ENCODE measurements at regions of chr2 and their contacts with region 1.

Region 1: GRCh38 chr2:208175069-208175839 is 11.9 kb upstream of the CRYGA start:
- DNase-seq: peak; percentile 95
- H3K4me3 ChIP-seq: no peak overlapping the region
- H3K27ac ChIP-seq: no peak overlapping the region
- H3K4me1 ChIP-seq: peaks cover 0 to 8% (median 1%) of the 10 kb centered on the region in 4 donors
- H3K27me3 ChIP-seq: no peaks in the 10 kb centered on the region
- CTCF ChIP-seq: peak; percentile 78 to 94 (median 85)
- EP300 ChIP-seq: no peak
- POLR2A ChIP-seq: no peak

Region 2: DNA sequence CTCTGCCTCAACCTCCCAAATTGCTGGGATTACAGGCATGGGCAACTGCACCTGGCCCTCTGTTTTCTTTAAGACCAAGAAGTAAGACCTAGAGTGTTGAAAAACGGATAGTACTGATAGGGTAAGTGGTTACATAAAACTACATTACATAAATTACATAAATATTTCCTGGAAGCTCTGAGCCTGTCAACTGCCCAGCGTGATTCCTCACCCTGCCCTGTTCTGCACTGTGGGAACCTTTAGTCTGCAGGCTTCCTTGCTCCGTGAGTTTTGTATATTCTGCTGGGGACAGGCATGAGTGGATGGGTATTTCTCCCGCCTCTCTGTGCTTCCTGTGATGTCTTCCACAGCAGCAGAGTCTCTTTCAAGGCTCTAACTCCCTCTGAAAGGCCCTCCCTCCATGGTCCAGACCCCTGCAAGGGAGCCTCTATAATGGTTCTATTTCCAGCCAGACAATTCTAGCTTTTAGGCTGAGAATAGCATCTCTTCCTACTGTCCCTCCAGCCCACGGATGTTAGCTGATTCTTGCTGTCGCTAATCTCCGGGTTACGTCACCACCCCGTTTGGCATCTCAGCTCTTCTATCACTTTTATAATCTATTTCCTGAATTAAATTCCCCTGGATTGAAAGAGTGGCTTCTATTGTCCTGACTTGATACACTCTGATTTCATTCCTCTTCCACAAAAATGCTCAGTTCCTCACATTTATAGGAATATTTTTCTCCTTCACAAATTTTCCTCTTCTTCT is 100.5 kb before region 1 on chr2:
- intact Hi-C with region 1: no loop called
- DNase-seq: no peak
- H3K4me3 ChIP-seq: no peak overlapping the region
- H3K27ac ChIP-seq: no peak overlapping the region
- H3K4me1 ChIP-seq: no peaks in the 10 kb centered on the region
- H3K27me3 ChIP-seq: peaks cover 0 to 18% (median 0%) of the 10 kb centered on the region in 4 donors
- CTCF ChIP-seq: no peak
- EP300 ChIP-seq: no peak
- POLR2A ChIP-seq: no peak

Region 3: GRCh38 chr2:208254871-208255556 is 79.8 kb after region 1 on chr2 and contains the start of gene IDH1:
- intact Hi-C with region 1: loop called (anchors 5 kb)
- DNase-seq: peak; percentile 99
- H3K4me3 ChIP-seq: peak within 1 kb of the TSS; percentile 73 to 88 (median 82)
- H3K27ac ChIP-seq: peak within 1 kb of the TSS; percentile 75 to 90 (median 84)
- H3K4me1 ChIP-seq: peaks cover 18 to 36% (median 24%) of the 10 kb centered on the region in 4 donors
- H3K27me3 ChIP-seq: no peaks in the 10 kb centered on the region
- CTCF ChIP-seq: peak; percentile 29 to 41 (median 33)
- EP300 ChIP-seq: no peak
- POLR2A ChIP-seq: no peak
- total RNA-seq, gene IDH1: 22.0 to 28.0 (median 24.8) TPM

Region 4: DNA sequence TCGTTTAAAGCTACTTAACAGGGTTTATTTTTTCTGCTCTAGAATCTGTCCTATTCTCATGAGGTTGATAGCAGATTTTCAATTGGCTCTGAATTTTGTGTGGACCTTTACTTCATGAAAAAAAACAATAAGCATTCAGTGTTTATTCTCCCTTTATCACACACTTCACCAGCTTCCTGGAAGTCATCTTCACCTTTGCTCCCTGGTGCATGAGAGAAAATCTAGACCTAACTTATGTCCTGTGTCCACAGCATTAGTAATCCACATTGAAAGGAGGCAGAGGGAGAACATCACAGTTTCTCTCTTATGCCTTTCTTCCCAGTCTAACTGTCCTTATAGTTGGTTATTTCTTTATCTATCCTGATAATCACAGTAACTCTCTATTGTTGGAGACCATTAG is 547.5 kb after region 1 on chr2:
- intact Hi-C with region 1: no loop called
- DNase-seq: no peak
- H3K4me3 ChIP-seq: no peak overlapping the region
- H3K27ac ChIP-seq: no peak overlapping the region
- H3K4me1 ChIP-seq: no peaks in the 10 kb centered on the region
- H3K27me3 ChIP-seq: no peaks in the 10 kb centered on the region
- CTCF ChIP-seq: no peak
- EP300 ChIP-seq: no peak
- POLR2A ChIP-seq: no peak

Region 5: DNA sequence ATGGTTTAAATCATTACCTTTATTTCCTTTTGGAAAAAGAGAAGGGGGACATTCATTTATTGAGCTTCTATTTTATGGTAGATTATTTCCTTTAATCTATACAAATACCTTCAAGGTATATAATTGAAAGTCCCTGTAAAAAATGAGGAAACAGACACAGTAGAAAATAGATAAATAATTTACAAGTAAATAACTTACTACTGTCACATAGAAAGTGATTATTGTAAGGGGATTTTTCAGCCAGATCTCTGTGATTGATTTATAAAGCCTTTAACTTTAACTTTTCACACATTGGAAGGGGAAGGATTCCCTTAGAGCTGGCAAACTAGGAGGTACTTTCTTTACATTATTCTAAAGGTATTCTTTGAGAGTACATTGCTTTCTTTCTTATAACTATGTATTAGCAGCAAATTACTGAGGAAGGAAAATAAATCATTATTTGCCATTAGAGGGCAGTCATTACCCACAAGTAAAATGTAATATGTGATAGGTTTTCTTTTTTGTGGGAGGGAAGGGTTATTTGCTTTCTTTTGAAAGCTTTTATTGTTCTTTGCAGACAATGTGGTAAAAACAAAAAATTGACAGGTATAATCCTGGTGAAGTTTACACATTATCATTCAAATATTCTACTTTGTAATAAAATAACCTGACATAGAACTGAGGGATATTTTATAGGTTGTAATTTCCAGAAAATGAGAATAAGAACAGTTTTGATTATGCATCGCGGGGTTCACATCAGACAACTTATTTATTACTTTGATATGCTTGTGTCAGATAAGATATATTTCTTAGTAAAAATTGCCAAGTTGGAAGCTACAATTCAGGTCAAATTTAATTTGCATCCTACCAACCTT is 1802.4 kb after region 1 on chr2:
- intact Hi-C with region 1: no loop called
- DNase-seq: no peak
- H3K4me3 ChIP-seq: no peak overlapping the region
- H3K27ac ChIP-seq: no peak overlapping the region
- H3K4me1 ChIP-seq: no peaks in the 10 kb centered on the region
- H3K27me3 ChIP-seq: peaks cover 0 to 4% (median 0%) of the 10 kb centered on the region in 4 donors
- CTCF ChIP-seq: peak; percentile 56 to 66 (median 65)
- EP300 ChIP-seq: no peak
- POLR2A ChIP-seq: no peak

Measured in esophagus muscularis mucosa (tissue), 4 donors.